ENCODE measurements at regions of chr17 and their contacts with region 1.

Region 1: GRCh38 chr17:81959362-81960129 is 1.4 kb downstream of the NOTUM start:
- DNase-seq: peak; percentile 70
- ATAC-seq: peak; percentile 29
- H3K4me3 Mint-ChIP-seq: peak overlapping the region; percentile 51
- H3K27ac Mint-ChIP-seq: no peak overlapping the region
- H3K4me1 Mint-ChIP-seq: 0 out of 2 replicates have a peak, but pooled peaks cover 4% of the 10 kb centered on the region
- H3K27me3 Mint-ChIP-seq: peaks cover 67% of the 10 kb centered on the region
- CTCF ChIP-seq: 0 out of 2 replicates have a peak, but pooled peaks have one; percentile 17

Region 2: DNA sequence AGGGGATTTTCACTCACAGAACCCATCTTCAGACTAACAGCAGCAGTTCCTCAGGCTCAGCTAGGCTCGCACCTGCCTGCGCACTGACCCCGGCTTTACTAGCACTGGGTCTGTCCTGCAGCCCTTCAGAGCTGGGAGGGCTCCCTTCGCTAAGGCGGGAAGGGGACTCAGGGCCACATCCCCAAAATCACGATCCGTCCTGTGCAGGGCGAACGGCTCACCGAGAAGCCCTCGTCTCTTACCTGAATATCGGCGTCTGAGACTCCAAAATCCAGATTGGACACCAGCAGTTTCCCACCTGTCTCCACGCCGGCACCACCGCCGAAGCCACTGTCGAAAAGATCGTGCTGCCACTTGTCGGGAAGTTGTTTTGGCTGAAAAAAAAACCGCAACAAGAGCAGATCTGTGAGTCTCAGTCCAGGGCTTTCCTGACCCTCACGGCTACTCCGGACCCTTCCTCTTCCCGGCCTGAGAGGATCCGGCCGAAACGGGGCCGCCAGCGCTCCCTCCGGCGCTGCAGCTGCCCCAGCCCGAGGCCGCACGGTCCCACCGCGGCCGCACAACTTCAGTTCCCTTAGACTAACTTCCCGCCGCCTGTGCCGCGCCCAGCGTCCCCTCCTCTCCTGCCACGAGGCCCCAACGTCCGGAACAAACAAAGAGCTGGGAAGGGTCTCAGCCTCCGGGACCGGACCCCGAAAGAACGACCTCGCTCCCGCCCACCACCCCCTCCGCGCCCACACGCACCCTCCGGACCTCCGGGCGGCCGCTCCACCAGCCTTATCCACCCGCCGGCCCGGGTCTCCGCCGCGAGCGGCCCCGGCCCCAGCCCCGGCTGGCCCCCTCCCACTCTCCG is 68.9 kb before region 1 on chr17:
- CTCF ChIA-PET with region 1: no interaction called
- POLR2A ChIA-PET with region 1: no interaction called
- DNase-seq: no peak
- ATAC-seq: no peak
- H3K4me3 Mint-ChIP-seq: peak overlapping the region; percentile 88
- H3K27ac Mint-ChIP-seq: peak overlapping the region; percentile 82
- H3K4me1 Mint-ChIP-seq: peaks cover 11% of the 10 kb centered on the region
- H3K27me3 Mint-ChIP-seq: no peaks in the 10 kb centered on the region
- CTCF ChIP-seq: no peak

Region 3: DNA sequence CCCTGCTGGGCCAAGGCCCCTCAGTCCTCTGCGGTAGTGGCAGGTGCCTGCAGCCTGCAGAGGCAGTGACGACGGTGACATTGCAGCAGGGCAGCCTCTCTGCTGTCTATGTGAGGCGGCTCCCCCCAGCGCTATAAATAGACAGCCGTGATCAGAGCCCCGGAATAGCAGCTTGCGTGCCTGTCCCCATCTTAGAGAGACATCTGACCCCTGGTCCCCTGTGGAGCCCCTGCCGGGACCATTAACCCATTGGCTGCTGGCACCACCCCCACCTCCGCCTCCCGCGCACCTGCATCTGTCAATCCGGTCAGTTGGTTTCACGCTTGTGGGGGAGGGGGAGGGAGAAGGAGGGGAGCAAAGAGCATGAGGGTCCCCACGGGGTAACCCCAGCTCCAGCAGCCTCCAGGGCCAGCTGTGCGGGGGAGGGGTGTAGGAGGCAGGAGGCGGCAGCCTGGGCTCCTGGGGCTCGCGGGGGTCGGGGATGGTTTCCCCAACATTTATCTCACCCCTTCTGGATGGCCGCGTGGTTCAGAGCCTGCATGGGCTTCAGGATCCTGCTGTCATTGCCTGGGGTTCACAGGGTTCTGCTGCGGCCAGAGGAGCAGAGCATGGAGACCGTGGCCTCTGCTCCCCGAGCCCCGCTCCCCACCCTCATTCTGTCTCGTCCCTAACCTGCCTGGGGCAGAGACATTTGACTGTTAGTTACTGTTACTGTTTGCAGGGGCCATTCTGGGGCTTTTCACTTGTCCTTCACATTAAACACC is 17.6 kb before region 1 on chr17:
- CTCF ChIA-PET with region 1: interaction called, 16 read pairs
- POLR2A ChIA-PET with region 1: interaction called, 3 read pairs
- DNase-seq: peak; percentile 68
- ATAC-seq: peak; percentile 16
- H3K4me3 Mint-ChIP-seq: peak overlapping the region; percentile 25
- H3K27ac Mint-ChIP-seq: no peak overlapping the region
- H3K4me1 Mint-ChIP-seq: peaks cover 12% of the 10 kb centered on the region; the same call in 1 of the 2 replicates
- H3K27me3 Mint-ChIP-seq: peaks cover 23% of the 10 kb centered on the region
- CTCF ChIP-seq: no peak

Region 4: GRCh38 chr17:82051776-82052637 is 92.5 kb after region 1 on chr17 and contains the starts of genes GPS1 and RFNG:
- CTCF ChIA-PET with region 1: no interaction called
- POLR2A ChIA-PET with region 1: no interaction called
- DNase-seq: peak; percentile 71
- ATAC-seq: peak; percentile 63
- H3K4me3 Mint-ChIP-seq: peak within 1 kb of the TSS; percentile 89
- H3K27ac Mint-ChIP-seq: peak within 1 kb of the TSS; percentile 79
- H3K4me1 Mint-ChIP-seq: peaks cover 4% of the 10 kb centered on the region
- H3K27me3 Mint-ChIP-seq: no peaks in the 10 kb centered on the region
- CTCF ChIP-seq: no peak
- total RNA-seq, gene GPS1: 166 to 181 TPM (median 167 TPM) in 3 replicates
- total RNA-seq, gene RFNG: 40.9 to 42.3 TPM (median 41.6 TPM) in 3 replicates

Region 5: DNA sequence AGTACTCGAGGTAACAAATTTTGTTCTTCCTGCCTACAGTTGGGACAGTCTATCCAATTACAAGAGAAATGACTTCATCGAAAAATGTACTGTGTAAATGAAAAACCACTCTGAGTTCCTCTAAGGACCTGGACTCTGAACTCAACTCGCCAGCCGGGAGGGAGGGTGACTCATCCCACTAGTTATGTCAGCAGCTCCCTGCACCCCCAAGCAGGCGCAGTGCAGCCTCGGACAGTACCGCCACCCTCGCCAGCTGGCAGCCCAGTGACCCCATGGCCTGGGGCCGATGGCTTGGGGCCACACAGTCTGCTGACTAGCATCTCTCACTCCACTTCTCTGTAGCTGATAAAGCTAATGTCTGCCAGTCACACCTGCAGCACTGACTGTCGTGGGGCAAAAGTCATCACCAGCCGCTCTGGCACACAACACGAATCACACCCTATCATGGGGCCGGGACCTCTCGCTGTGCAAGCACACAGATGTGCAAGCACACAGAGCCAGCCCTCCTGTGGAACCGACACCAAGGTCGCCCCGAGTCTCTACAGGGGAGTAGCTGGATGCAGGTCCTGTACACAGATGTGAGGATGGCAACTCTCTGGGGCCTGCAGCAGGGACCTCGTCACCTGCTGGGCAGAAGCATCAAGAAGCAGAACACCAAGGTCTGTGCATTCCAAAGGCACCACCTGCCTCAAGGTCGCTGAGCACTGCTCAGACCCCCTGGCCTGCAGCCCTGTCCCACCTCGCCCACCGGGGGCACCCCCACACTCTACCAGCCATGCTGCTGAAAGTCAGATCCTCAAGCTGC is 308.2 kb after region 1 on chr17:
- CTCF ChIA-PET with region 1: no interaction called
- POLR2A ChIA-PET with region 1: no interaction called
- DNase-seq: no peak
- ATAC-seq: no peak
- H3K4me3 Mint-ChIP-seq: no peak overlapping the region
- H3K27ac Mint-ChIP-seq: peak overlapping the region; percentile 63
- H3K4me1 Mint-ChIP-seq: peaks cover 46% of the 10 kb centered on the region
- H3K27me3 Mint-ChIP-seq: no peaks in the 10 kb centered on the region
- CTCF ChIP-seq: no peak